ENCODE measurements at regions of chr4 and their contacts with region 1.

Region 1: GRCh38 chr4:45453258-45453853 is 670.5 kb downstream of the GABRG1 start:
- DNase-seq: peak; percentile 72
- H3K4me3 Mint-ChIP-seq: no peak overlapping the region
- H3K27ac Mint-ChIP-seq: no peak overlapping the region
- H3K4me1 Mint-ChIP-seq: no peaks in the 10 kb centered on the region
- H3K27me3 Mint-ChIP-seq: no peaks in the 10 kb centered on the region
- CTCF ChIP-seq: peak; percentile 59

Region 2: GRCh38 chr4:45442466-45442865 is 10.9 kb before region 1 on chr4:
- CTCF ChIA-PET with region 1: interaction called, 14 read pairs
- POLR2A ChIA-PET with region 1: interaction called, 3 read pairs
- intact Hi-C with region 1: no loop called
- DNase-seq: peak; percentile 63
- H3K4me3 Mint-ChIP-seq: no peak overlapping the region
- H3K27ac Mint-ChIP-seq: no peak overlapping the region
- H3K4me1 Mint-ChIP-seq: peaks cover 7% of the 10 kb centered on the region
- H3K27me3 Mint-ChIP-seq: no peaks in the 10 kb centered on the region
- CTCF ChIP-seq: peak; percentile 44

Region 3: DNA sequence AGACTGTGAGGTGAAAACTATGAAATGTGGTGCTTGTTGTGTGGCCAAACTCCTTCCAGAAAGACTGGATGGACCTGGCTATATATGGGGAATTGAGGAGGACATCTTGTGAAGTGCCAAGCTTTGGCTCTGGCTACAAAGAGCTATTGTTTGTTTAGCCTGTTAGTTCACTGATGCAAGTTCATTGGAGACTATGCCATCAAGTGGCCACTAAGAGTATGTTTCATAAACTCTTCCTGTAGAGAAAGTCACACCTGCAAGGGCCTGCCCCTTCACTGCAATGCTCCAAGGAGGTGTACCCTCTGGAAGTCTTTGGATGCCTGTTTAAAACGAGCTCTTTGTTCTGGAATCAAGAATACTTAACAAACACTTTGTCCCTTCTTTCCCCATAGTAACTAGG is 288.5 kb after region 1 on chr4:
- CTCF ChIA-PET with region 1: interaction called, 5 read pairs
- POLR2A ChIA-PET with region 1: no interaction called
- intact Hi-C with region 1: loop called (anchors 5 kb)
- DNase-seq: peak; percentile 16
- H3K4me3 Mint-ChIP-seq: no peak overlapping the region
- H3K27ac Mint-ChIP-seq: no peak overlapping the region
- H3K4me1 Mint-ChIP-seq: no peaks in the 10 kb centered on the region
- H3K27me3 Mint-ChIP-seq: no peaks in the 10 kb centered on the region
- CTCF ChIP-seq: no peak

Measured in MCF 10A (cell line).